CD4-positive, alpha-beta T cell (primary cell): ENCODE measurements at regions of chr19 and their contacts with region 1.

Region 1: DNA sequence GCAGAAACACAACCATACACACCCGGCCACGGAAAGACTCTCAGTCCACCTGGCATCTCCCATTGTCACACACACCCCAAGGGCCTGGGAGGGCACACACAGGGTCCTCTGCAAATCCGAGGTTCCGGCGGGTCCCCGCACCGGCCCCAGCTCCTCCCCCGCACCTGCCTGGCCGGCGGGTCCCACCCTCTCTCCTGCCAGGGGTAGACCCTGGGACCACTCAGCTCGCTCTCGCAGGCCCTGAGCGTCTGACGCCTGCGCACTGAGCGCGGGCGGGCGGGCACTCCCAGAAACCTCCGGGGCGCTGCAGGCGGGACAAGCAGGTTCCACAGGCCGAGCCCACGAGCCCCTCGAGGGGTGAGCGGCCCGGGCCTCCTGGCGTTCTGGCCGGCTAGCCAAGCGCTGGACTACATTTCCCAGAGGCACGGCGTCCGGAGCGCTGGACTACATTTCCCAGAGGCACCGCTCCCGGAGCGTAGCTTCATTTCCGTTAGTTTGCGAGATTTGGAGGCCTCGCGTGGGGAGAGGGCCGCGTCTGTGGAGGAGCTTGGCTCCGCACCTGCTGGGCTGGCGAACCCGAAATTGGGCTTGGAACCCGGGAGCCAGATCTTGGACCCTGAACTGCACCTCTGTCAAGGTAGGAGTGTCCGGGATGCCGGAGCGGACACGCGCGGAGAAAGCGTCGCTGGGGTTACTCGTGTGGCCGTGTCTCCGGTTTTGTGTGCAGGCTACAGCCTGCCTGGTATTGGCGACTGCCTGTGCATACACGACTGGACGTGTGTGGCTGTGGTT is at the start of gene ZNF420:
- DNase-seq: peak; percentile 75 to 95 (median 84)
- ATAC-seq: peak; percentile 95
- H3K4me3 ChIP-seq: peak within 1 kb of the TSS; percentile 99
- H3K4me3 Mint-ChIP-seq: peak within 1 kb of the TSS; percentile 98
- H3K27ac ChIP-seq: peak within 1 kb of the TSS; percentile 65 to 72
- H3K27ac Mint-ChIP-seq: peak within 1 kb of the TSS; percentile 91
- H3K4me1 ChIP-seq: peaks cover 25% of the 10 kb centered on the region
- H3K4me1 Mint-ChIP-seq: peaks cover 30% of the 10 kb centered on the region
- H3K27me3 ChIP-seq: no peaks in the 10 kb centered on the region
- H3K27me3 Mint-ChIP-seq: no peaks in the 10 kb centered on the region
- CTCF ChIP-seq: no peak
- total RNA-seq, gene ZNF420: 3.7 to 4.5 TPM

Region 2: DNA sequence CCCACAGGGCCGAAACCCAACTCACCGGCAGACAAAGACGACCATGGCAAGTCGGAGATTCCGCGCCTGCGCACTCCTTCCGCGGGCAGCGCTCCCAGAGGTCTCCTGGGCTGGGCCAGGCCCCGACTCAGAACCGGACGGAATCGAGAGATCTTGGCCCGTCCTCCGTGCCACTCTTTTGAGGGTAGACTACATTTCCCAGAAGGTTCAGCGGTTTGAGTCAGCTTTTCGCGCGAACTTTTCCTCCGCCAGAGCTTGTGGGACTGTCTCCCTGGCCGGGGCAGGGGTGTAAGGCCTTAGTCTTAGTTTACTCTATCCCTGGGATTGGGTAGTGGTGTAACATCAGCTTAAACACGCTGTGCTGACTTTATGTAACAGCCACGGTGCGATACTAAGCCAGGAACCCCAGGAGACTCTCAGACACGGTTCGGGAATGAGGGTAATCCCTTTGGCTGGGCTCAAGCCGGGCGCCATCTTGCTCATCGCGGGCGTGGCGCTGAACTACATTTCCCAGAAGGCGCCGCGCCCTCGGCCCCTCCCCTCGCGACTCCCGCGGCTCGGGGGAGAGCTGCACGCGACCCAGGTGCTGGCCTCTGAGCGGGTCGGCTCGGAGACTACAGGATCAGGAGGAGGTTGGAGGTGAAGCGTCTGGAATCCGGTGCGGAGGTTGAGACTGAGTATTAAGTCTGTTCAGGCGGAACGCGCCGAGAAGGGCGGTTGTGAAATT is 549.8 kb before region 1 on chr19 and contains the start of gene ZNF260:
- CTCF ChIA-PET with region 1: no interaction called
- POLR2A ChIA-PET with region 1: interaction called, 6 read pairs
- intact Hi-C with region 1: loop called in 1 of 2 experiments (anchors 5 kb)
- DNase-seq: peak; percentile 82 to 97 (median 88)
- ATAC-seq: peak; percentile 87
- H3K4me3 ChIP-seq: peak within 1 kb of the TSS; percentile 80
- H3K4me3 Mint-ChIP-seq: peak within 1 kb of the TSS; percentile 97
- H3K27ac ChIP-seq: peak within 1 kb of the TSS; percentile 72 to 90
- H3K27ac Mint-ChIP-seq: peak within 1 kb of the TSS; percentile 93
- H3K4me1 ChIP-seq: peaks cover 19% of the 10 kb centered on the region
- H3K4me1 Mint-ChIP-seq: peaks cover 29% of the 10 kb centered on the region
- H3K27me3 ChIP-seq: no peaks in the 10 kb centered on the region
- H3K27me3 Mint-ChIP-seq: no peaks in the 10 kb centered on the region
- CTCF ChIP-seq: no peak
- total RNA-seq, gene ZNF260: 2.0 to 5.0 TPM

Region 3: DNA sequence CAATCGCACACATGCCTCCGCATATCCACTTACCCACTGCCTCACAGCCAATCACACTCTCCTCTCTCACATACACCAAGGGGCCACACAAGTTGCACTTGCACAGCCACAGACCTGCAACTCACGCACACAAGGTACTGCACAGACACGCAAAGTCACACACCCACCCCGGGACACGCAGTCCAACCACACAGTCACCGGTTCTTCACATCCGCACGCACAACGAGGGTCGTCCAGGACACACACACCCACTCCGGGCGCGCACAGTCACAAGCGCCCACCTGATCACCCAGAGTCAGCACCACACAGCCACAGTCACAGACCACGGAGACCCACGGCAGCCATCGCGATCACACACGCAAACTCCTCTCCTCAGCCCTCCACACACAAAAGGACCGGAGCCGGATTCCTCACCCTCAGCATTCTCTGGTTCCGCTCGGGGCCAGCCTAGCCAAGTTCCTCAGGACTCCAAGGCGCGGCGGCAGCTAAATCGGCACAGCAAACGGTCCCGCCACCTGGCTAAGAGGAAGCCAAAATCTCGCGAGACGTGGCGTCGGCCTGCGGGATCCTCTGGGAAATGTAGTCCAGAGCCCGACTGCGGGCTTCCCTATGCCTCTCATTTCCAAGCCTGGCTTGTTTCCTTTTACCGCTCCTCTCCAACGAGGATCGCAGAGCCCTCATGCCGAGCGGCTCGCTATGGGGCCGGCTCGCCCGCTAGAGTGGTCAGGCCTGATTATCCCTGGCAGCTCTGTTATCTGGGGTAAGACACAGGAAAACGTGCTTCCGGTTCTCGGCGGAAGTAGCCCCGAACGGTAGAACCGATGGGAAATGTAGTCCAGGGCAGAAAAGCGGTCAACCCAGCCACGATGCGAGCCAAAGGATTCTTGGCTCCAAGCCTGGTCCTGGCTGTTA is 305.6 kb before region 1 on chr19 and contains the start of gene ZNF850:
- CTCF ChIA-PET with region 1: no interaction called
- POLR2A ChIA-PET with region 1: no interaction called
- intact Hi-C with region 1: loop called (anchors 5 to 10 kb)
- DNase-seq: peak; percentile 87 to 96 (median 93)
- ATAC-seq: peak; percentile 94
- H3K4me3 ChIP-seq: peak within 1 kb of the TSS; percentile 91
- H3K4me3 Mint-ChIP-seq: peak within 1 kb of the TSS; percentile 95
- H3K27ac ChIP-seq: peak within 1 kb of the TSS; percentile 78 to 94
- H3K27ac Mint-ChIP-seq: peak within 1 kb of the TSS; percentile 84
- H3K4me1 ChIP-seq: peaks cover 20% of the 10 kb centered on the region
- H3K4me1 Mint-ChIP-seq: peaks cover 20% of the 10 kb centered on the region
- H3K27me3 ChIP-seq: no peaks in the 10 kb centered on the region
- H3K27me3 Mint-ChIP-seq: no peaks in the 10 kb centered on the region
- CTCF ChIP-seq: no peak
- total RNA-seq, gene ZNF850: 0.77 to 2.1 TPM

Region 4: GRCh38 chr19:36973021-36973843 is 104.9 kb before region 1 on chr19:
- CTCF ChIA-PET with region 1: interaction called, 11 read pairs
- POLR2A ChIA-PET with region 1: interaction called, 5 read pairs
- intact Hi-C with region 1: loop called (anchors 1 kb)
- DNase-seq: peak; percentile 48 to 91 (median 72)
- ATAC-seq: peak; percentile 98
- H3K4me3 ChIP-seq: peak overlapping the region; percentile 83
- H3K4me3 Mint-ChIP-seq: peak overlapping the region; percentile 92
- H3K27ac ChIP-seq: peak overlapping the region; percentile 57 to 78
- H3K27ac Mint-ChIP-seq: peak overlapping the region; percentile 94
- H3K4me1 ChIP-seq: peaks cover 17% of the 10 kb centered on the region
- H3K4me1 Mint-ChIP-seq: peaks cover 16% of the 10 kb centered on the region
- H3K27me3 ChIP-seq: no peaks in the 10 kb centered on the region
- H3K27me3 Mint-ChIP-seq: no peaks in the 10 kb centered on the region
- CTCF ChIP-seq: peak; percentile 97

Region 5: GRCh38 chr19:37045140-37045539 is 33.0 kb before region 1 on chr19:
- CTCF ChIA-PET with region 1: no interaction called
- POLR2A ChIA-PET with region 1: no interaction called
- intact Hi-C with region 1: no loop called
- DNase-seq: no peak
- ATAC-seq: no peak
- H3K4me3 ChIP-seq: no peak overlapping the region
- H3K4me3 Mint-ChIP-seq: no peak overlapping the region
- H3K27ac ChIP-seq: no peak overlapping the region
- H3K27ac Mint-ChIP-seq: no peak overlapping the region
- H3K4me1 ChIP-seq: no peaks in the 10 kb centered on the region
- H3K4me1 Mint-ChIP-seq: no peaks in the 10 kb centered on the region
- H3K27me3 ChIP-seq: no peaks in the 10 kb centered on the region
- H3K27me3 Mint-ChIP-seq: no peaks in the 10 kb centered on the region
- CTCF ChIP-seq: no peak

Region 6: DNA sequence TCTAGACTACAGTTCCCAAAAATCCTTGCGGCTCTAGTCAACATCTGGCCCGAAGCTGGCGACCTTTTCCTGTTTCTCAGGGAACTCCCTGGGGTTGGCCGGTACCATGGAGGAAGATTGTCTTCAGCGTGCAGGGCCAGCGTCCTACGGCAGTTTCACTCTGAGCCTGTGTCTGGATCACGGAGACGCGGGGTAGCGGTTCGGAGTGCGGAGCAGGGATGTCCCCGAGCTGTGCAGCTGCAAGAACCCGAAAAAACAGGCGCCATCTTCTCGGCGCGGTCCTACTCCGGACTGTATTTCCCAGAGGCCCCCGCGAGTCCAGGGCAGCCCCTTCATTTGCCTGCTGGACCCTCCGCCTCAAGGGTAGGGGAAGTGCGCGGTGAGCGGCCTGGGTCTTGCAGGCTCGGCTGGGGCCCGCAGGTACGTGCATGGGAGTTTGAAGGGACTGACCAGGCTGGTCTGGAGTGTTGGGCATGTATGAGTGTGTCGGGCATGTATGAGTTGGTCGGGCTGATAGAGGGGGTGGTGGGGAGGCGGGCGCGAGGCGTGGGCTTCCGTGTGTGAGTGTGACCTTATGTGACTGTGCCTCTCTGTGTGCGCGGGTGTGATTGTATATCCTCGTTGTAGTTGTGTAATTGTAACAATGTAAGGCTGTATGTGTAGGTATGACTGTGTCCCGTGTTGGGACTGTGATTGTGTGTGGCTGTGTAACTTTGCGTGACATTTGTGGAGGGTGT is 139.9 kb after region 1 on chr19 and contains the start of gene ZNF383:
- CTCF ChIA-PET with region 1: no interaction called
- POLR2A ChIA-PET with region 1: interaction called, 16 read pairs
- intact Hi-C with region 1: loop called (anchors 2 to 5 kb)
- DNase-seq: peak; percentile 66 to 90 (median 78)
- ATAC-seq: peak; percentile 81
- H3K4me3 ChIP-seq: peak within 1 kb of the TSS; percentile 94
- H3K4me3 Mint-ChIP-seq: peak within 1 kb of the TSS; percentile 93
- H3K27ac ChIP-seq: peak within 1 kb of the TSS; percentile 81 to 90
- H3K27ac Mint-ChIP-seq: peak within 1 kb of the TSS; percentile 89
- H3K4me1 ChIP-seq: peaks cover 14% of the 10 kb centered on the region
- H3K4me1 Mint-ChIP-seq: peaks cover 42% of the 10 kb centered on the region
- H3K27me3 ChIP-seq: no peaks in the 10 kb centered on the region
- H3K27me3 Mint-ChIP-seq: no peaks in the 10 kb centered on the region
- CTCF ChIP-seq: no peak
- total RNA-seq, gene ZNF383: 13.1 to 15.7 TPM

Region 7: GRCh38 chr19:37506387-37507166 is 428.4 kb after region 1 on chr19 and contains the start of gene ZNF793:
- CTCF ChIA-PET with region 1: no interaction called
- POLR2A ChIA-PET with region 1: interaction called, 11 read pairs
- intact Hi-C with region 1: no loop called
- DNase-seq: peak; percentile 68 to 92 (median 78)
- ATAC-seq: peak; percentile 85
- H3K4me3 ChIP-seq: peak within 1 kb of the TSS; percentile 68
- H3K4me3 Mint-ChIP-seq: no peak within 1 kb of the TSS
- H3K27ac ChIP-seq: peak within 1 kb of the TSS; percentile 88 to 92
- H3K27ac Mint-ChIP-seq: no peak within 1 kb of the TSS
- H3K4me1 ChIP-seq: peaks cover 20% of the 10 kb centered on the region
- H3K4me1 Mint-ChIP-seq: no peaks in the 10 kb centered on the region
- H3K27me3 ChIP-seq: no peaks in the 10 kb centered on the region
- H3K27me3 Mint-ChIP-seq: no peaks in the 10 kb centered on the region
- CTCF ChIP-seq: no peak
- total RNA-seq, gene ZNF793: 2.3 TPM